ENCODE measurements at regions of chr1 and their contacts with region 1.

Region 1: GRCh38 chr1:156625436-156626078 is 6.3 kb downstream of the HAPLN2 start:
- DNase-seq: peak; percentile 64
- H3K4me3 Mint-ChIP-seq: peak overlapping the region; percentile 48
- H3K27ac Mint-ChIP-seq: no peak overlapping the region
- H3K4me1 Mint-ChIP-seq: peaks cover 10% of the 10 kb centered on the region
- H3K27me3 Mint-ChIP-seq: peaks cover 46% of the 10 kb centered on the region

Region 2: DNA sequence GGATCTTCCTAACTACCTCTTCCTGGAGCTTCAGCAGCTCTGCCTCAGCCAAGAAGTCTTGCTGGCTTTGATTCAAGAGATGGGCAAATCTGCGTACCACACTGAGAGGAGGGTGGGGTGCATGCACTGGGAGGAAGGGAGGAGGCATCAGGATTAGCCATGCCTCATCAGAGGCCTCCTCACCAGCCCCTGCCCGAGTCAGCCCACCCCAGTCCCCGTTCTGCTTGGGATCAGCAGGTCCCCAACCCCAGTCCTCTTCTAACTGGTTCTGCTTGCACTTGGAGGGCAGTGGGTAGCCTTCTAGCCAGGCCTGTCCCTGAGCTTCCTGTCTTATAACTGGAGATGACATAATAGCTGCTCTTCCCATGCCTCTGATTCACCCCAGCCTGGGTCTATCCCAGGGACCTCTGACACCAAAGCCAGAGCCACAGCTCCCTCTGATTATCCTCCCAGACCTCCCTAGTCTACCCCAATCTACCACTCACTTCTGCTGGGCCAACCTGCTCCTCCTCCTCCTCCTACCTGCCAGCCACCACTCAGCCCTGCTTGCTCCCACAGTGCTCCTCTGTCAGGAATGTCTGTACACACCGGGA is 84.7 kb before region 1 on chr1:
- CTCF ChIA-PET with region 1: no interaction called
- POLR2A ChIA-PET with region 1: no interaction called
- intact Hi-C with region 1: no loop called
- DNase-seq: no peak
- H3K4me3 Mint-ChIP-seq: no peak overlapping the region
- H3K27ac Mint-ChIP-seq: no peak overlapping the region
- H3K4me1 Mint-ChIP-seq: no peaks in the 10 kb centered on the region
- H3K27me3 Mint-ChIP-seq: no peaks in the 10 kb centered on the region

Region 3: GRCh38 chr1:156601122-156601830 is 24.3 kb before region 1 on chr1 and contains the start of gene GPATCH4:
- CTCF ChIA-PET with region 1: interaction called, 10 read pairs
- POLR2A ChIA-PET with region 1: no interaction called
- intact Hi-C with region 1: no loop called
- DNase-seq: peak; percentile 88
- H3K4me3 Mint-ChIP-seq: peak within 1 kb of the TSS; percentile 94
- H3K27ac Mint-ChIP-seq: peak within 1 kb of the TSS; percentile 95
- H3K4me1 Mint-ChIP-seq: peaks cover 38% of the 10 kb centered on the region
- H3K27me3 Mint-ChIP-seq: no peaks in the 10 kb centered on the region
- total RNA-seq, gene GPATCH4: 40.2 to 43.2 TPM

Region 4: GRCh38 chr1:156641761-156642264 is 16.3 kb after region 1 on chr1 and contains the start of gene BCAN:
- CTCF ChIA-PET with region 1: interaction called, 34 read pairs
- POLR2A ChIA-PET with region 1: no interaction called
- intact Hi-C with region 1: no loop called
- DNase-seq: peak; percentile 34
- H3K4me3 Mint-ChIP-seq: no peak within 1 kb of the TSS
- H3K27ac Mint-ChIP-seq: no peak within 1 kb of the TSS
- H3K4me1 Mint-ChIP-seq: peaks cover 24% of the 10 kb centered on the region
- H3K27me3 Mint-ChIP-seq: peaks cover 75% of the 10 kb centered on the region
- total RNA-seq, gene BCAN: not detected

Region 5: DNA sequence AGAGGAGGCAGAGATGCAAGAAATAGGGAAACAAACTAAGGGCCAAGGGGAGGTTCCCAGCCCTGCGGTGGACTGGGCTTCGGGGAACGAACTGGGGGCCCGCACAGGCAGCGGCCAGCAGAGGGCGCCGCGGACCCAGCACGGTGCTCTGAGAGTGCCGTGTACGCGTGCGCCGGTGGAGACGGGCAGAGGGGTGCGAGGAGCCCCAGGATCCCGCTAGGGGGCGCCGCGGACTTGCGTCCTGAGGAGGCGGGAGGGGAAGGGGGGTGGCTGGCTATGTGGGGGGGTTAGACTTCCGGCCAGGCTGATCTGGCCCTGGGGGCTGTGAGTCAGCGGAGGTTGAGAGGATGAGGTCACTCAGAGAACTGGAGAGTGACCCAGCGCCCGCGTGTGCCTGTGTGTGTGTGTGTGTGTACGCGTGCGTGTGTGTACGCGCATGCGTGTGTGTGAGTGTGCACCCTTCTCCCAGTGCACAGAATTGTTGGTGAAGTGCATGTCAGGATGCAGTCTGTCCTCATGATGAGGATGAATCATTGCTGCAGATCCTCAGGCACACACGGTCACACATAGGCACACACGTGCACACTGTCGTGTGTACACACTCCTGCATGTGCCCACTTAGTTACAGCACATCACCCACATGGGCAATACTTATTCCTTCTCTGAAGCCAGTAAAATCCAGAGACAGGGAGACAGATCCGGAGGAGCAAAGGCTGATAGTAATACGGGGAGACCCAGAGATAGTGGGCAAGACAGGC is 34.6 kb after region 1 on chr1:
- CTCF ChIA-PET with region 1: interaction called, 209 read pairs
- POLR2A ChIA-PET with region 1: no interaction called
- intact Hi-C with region 1: loop called (anchors 1 kb)
- DNase-seq: peak; percentile 96
- H3K4me3 Mint-ChIP-seq: peak overlapping the region; percentile 81
- H3K27ac Mint-ChIP-seq: peak overlapping the region; percentile 82
- H3K4me1 Mint-ChIP-seq: peaks cover 37% of the 10 kb centered on the region
- H3K27me3 Mint-ChIP-seq: peaks cover 27% of the 10 kb centered on the region

Region 6: DNA sequence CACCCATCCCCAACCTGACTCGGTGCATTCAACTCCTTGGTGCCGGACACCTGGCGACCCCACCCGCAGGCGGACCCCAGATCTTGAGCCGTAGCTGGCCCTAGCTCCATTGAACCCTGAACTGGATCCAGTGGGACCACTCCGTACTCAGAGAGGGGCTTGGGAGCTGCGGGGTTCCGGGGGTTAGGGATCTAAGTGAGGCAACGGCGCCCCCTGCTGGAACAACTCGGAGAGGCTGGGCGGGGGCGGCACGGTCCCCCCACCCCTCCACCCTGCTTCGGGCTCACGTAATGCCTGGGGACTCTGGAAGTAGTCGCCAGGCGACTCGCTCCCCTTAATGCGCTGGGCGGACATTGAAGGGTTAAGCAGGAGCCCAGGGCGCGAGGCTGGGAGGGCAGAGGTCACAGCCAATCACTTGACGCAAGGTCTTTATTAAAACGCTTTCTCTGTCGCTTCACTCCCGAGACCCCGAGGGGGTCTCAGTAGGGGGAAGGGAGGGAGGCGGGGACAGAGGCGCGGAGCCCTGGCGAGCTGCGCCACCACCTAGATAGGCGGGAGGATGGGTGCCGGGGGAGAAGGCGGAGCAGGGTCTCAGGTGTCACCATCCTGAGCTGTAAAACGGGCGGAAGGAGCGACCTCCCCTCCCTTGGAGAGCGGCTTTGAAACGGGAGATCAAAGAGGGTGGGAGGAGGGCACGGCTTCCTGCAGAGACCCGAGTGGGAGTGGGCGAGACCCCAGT is 80.5 kb after region 1 on chr1:
- CTCF ChIA-PET with region 1: interaction called, 15 read pairs
- POLR2A ChIA-PET with region 1: no interaction called
- intact Hi-C with region 1: no loop called
- DNase-seq: peak; percentile 82
- H3K4me3 Mint-ChIP-seq: peak overlapping the region; percentile 75
- H3K27ac Mint-ChIP-seq: no peak overlapping the region
- H3K4me1 Mint-ChIP-seq: peaks cover 28% of the 10 kb centered on the region
- H3K27me3 Mint-ChIP-seq: peaks cover 24% of the 10 kb centered on the region